ENCODE measurements at regions of chr1 and their contacts with region 1.

Region 1: DNA sequence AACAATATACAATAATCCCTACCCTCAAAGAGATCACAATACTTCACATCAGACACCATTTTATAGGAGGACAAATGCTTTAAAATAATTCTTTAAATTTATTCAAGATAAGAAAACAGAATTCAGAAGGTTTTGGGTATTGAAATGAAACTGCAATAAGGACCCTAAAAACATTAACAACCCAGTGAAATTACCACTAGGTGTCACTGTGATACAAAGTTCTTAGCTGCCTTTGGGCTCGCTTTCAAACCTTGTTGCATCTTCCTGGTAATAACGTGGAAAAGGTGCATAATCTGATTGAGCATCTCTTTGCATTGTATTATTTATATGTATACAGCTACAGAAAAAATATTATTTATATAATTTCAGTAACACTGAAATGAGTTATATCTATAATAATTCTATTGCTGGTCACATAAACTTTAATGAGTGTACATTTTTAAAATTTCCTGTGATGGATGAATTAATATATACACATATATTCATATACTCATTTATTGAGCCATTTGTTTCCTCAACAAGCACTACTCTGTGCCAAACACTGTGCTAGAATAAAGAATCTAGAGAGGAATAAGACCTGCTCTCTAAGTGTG is 185.2 kb downstream of the FAF1 start:
- DNase-seq: no peak
- H3K4me3 Mint-ChIP-seq: no peak overlapping the region
- H3K27ac Mint-ChIP-seq: no peak overlapping the region
- H3K4me1 Mint-ChIP-seq: no peaks in the 10 kb centered on the region
- H3K27me3 Mint-ChIP-seq: no peaks in the 10 kb centered on the region

Region 2: GRCh38 chr1:50796272-50796671 is 21.4 kb after region 1 on chr1:
- CTCF ChIA-PET with region 1: interaction called, 11 read pairs
- POLR2A ChIA-PET with region 1: no interaction called
- intact Hi-C with region 1: no loop called
- DNase-seq: no peak
- H3K4me3 Mint-ChIP-seq: no peak overlapping the region
- H3K27ac Mint-ChIP-seq: no peak overlapping the region
- H3K4me1 Mint-ChIP-seq: peaks cover 2% of the 10 kb centered on the region
- H3K27me3 Mint-ChIP-seq: no peaks in the 10 kb centered on the region

Measured in activated CD4-positive, alpha-beta memory T cell treated with anti-CD3 and anti-CD28 coated beads for 36 hours (primary cell).